Caco-2 (cell line): ENCODE measurements at regions of chr1 and their contacts with region 1.

Region 1: GRCh38 chr1:67214420-67215174 is 48.3 kb downstream of the IL23R start:
- DNase-seq: peak in 1 of 2 experiments; percentile 39
- H3K4me3 ChIP-seq: no peak overlapping the region
- H3K4me3 Mint-ChIP-seq: no peak overlapping the region
- H3K27ac Mint-ChIP-seq: no peak overlapping the region
- H3K4me1 ChIP-seq: no peaks in the 10 kb centered on the region
- H3K4me1 Mint-ChIP-seq: no peaks in the 10 kb centered on the region
- H3K27me3 ChIP-seq: no peaks in the 10 kb centered on the region
- H3K27me3 Mint-ChIP-seq: no peaks in the 10 kb centered on the region
- CTCF ChIP-seq: peak; percentile 40 to 44

Region 2: DNA sequence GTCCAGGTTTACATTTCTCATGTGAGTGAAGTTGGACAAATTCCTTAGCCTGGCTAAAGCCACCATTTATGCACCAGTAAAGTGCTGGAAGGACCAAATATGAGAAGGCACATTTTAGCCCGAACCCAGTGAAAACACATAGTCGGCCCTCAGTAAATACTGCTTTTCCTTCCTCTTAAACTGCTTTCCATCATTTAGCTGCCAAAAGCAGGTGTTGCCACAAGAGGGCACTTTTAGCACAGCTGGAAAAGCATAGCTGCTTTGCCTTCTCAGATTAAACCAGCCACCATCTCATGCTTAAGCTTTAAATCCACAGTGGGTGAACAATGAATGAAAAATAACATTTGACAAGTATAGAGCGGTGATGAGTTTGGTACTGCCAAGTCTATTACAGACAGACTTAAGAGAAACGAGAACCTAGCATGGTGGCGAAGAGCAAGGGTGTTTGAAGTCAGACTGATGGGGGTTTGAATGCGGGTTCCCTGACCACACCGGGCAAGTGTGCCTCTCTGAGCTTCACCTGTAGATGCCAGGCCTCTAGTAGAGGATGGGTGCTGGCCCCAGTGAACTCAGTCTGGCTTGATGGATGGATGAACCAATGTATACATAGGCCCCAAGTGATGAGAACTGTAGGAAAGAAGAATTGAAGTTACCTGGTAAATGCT is 218.4 kb before region 1 on chr1:
- CTCF ChIA-PET with region 1: interaction called, 8 read pairs
- POLR2A ChIA-PET with region 1: no interaction called
- intact Hi-C with region 1: loop called (anchors 5 kb)
- DNase-seq: peak; percentile 42
- H3K4me3 ChIP-seq: no peak overlapping the region
- H3K4me3 Mint-ChIP-seq: no peak overlapping the region
- H3K27ac Mint-ChIP-seq: no peak overlapping the region
- H3K4me1 ChIP-seq: no peaks in the 10 kb centered on the region
- H3K4me1 Mint-ChIP-seq: no peaks in the 10 kb centered on the region
- H3K27me3 ChIP-seq: no peaks in the 10 kb centered on the region
- H3K27me3 Mint-ChIP-seq: no peaks in the 10 kb centered on the region
- CTCF ChIP-seq: peak; percentile 43 to 62

Region 3: DNA sequence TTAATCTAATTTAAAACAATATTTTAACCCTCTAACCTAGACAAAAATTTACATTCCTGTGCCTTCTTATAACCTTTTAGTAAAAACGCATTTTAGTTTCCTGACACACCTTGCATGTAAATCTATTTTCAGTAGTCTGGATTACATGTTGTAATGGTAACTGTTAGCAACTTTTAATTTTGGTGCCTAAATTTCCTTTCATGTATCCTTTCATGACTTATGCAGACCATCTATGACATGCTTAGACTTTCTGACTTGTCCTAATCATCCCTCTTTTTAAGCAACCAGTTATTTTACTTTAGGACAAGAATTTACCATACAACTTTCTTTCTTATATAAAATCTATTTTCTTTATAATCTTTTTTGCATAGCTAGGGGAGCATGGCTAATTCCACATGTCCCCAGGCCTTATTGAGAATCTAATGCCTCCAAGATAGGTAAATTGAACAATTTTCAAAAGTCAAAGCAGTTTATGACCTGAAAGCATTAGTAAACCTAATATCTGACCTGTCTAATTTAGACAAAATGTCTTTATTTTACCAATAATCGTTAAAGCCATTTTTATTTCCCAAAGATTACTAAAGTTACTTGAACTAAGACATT is 35.6 kb after region 1 on chr1:
- CTCF ChIA-PET with region 1: no interaction called
- POLR2A ChIA-PET with region 1: no interaction called
- intact Hi-C with region 1: no loop called
- DNase-seq: peak in 1 of 2 experiments; percentile 3
- H3K4me3 ChIP-seq: no peak overlapping the region
- H3K4me3 Mint-ChIP-seq: no peak overlapping the region
- H3K27ac Mint-ChIP-seq: no peak overlapping the region
- H3K4me1 ChIP-seq: no peaks in the 10 kb centered on the region
- H3K4me1 Mint-ChIP-seq: no peaks in the 10 kb centered on the region
- H3K27me3 ChIP-seq: no peaks in the 10 kb centered on the region
- H3K27me3 Mint-ChIP-seq: peaks cover 4% of the 10 kb centered on the region
- CTCF ChIP-seq: no peak